AG04450 (cell line): ENCODE measurements at regions of chr17 and their contacts with region 1.

Region 1: GRCh38 chr17:27236717-27237315 is 57.1 kb upstream of the WSB1 start:
- DNase-seq: peak; percentile 59
- H3K4me3 ChIP-seq: no peak overlapping the region
- H3K27ac ChIP-seq: no peak overlapping the region
- H3K27me3 ChIP-seq: no peaks in the 10 kb centered on the region
- CTCF ChIP-seq: peak; percentile 95

Region 2: GRCh38 chr17:27217631-27218030 is 19.2 kb before region 1 on chr17:
- CTCF ChIA-PET with region 1: interaction called, 12 read pairs
- POLR2A ChIA-PET with region 1: no interaction called
- DNase-seq: no peak
- H3K4me3 ChIP-seq: no peak overlapping the region
- H3K27ac ChIP-seq: no peak overlapping the region
- H3K27me3 ChIP-seq: peaks cover 8% of the 10 kb centered on the region
- CTCF ChIP-seq: no peak

Region 3: DNA sequence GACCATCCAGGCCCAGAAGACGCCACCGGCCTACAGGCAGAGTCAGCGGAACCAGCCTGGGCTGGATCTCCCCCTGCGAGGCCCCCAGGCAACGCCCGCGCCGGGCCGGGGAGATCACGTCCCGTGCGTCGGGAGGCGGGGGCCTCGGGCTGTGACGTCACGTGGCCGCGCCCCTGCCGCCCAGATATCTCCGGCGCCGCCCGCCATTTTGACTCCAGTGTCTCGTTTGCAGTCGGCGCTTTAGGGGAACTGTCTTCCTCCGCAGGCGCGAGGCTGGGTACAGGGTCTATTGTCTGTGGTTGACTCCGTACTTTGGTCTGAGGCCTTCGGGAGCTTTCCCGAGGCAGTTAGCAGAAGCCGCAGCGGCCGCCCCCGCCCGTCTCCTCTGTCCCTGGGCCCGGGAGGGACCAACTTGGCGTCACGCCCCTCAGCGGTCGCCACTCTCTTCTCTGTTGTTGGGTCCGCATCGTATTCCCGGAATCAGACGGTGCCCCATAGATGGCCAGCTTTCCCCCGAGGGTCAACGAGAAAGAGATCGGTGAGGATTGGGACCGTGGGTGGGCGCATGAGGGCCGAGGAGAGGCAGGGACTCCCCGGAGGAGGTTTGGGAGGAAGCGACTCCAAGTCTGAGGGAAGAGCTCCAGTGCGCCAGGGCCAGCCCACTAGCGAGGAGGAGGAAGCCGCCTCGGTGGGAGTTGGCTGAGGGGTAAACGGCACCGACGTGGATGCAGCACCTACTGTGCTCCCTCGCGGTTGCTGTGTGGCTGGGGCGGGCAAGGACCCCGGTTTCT is 57.3 kb after region 1 on chr17 and contains the start of gene WSB1:
- CTCF ChIA-PET with region 1: interaction called, 39 read pairs
- POLR2A ChIA-PET with region 1: interaction called, 17 read pairs
- DNase-seq: peak; percentile 73
- H3K4me3 ChIP-seq: peak within 1 kb of the TSS; percentile 94
- H3K27ac ChIP-seq: peak within 1 kb of the TSS; percentile 98
- H3K27me3 ChIP-seq: no peaks in the 10 kb centered on the region
- CTCF ChIP-seq: no peak
- polyA plus RNA-seq, gene WSB1: 156 and 204 TPM in 2 replicates

Region 4: DNA sequence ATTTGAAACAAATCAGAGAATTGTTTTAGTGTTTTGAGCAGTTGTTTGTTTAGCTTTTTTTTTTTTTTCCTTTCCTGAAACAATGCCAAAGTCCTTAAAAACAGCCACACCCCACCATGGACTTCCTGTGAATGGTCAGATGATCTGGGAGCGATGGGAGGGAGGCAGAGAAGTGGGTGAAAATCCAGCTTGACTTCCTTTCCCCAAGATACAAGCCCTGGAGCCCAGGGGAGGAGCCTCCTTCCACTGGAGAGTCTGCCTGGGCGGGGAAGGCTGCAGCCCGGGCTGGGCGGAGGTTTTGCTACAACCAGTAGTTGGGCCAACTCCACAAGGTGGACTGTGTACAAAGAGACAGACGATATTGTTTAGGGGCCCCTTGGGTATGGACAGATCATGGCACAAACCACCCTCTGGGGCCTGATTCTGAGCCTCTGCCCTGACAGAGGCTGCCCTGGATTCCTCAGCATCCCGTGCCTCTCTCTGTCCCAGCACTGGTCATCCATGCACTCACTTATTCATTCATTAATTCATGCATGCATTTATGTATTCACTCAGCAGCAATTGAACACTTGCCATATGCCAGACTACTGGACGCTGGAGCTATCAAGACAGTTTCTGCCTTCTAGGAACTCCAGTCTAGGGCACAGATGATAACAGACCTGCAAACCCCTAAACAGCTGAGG is 86.8 kb after region 1 on chr17:
- CTCF ChIA-PET with region 1: interaction called, 41 read pairs
- POLR2A ChIA-PET with region 1: interaction called, 6 read pairs
- DNase-seq: no peak
- H3K4me3 ChIP-seq: no peak overlapping the region
- H3K27ac ChIP-seq: no peak overlapping the region
- H3K27me3 ChIP-seq: no peaks in the 10 kb centered on the region
- CTCF ChIP-seq: no peak

Region 5: GRCh38 chr17:27353461-27354050 is 116.7 kb after region 1 on chr17:
- CTCF ChIA-PET with region 1: interaction called, 14 read pairs
- POLR2A ChIA-PET with region 1: no interaction called
- DNase-seq: peak; percentile 81
- H3K4me3 ChIP-seq: peak overlapping the region; percentile 69
- H3K27ac ChIP-seq: peak overlapping the region; percentile 78
- H3K27me3 ChIP-seq: peaks cover 3% of the 10 kb centered on the region
- CTCF ChIP-seq: peak; percentile 53

Region 6: DNA sequence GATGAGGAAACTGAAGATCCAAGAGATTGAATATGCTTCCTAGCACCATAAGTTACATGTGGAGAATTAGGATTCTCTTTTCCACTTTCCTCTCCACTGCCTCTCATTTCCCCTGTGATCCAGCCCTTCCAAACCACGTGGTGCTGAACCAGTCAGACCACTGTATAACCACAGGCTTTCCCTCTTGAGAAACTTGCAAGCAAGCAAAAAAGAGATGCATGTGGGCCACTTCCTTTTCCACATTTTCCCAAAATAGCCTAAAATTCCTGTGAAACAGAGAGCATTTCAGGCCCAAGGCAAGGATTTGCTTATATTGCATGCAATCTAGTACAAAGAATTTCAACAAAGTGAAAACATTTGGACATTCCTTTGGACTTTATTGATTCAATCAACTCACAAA is 160.1 kb after region 1 on chr17:
- CTCF ChIA-PET with region 1: no interaction called
- POLR2A ChIA-PET with region 1: no interaction called
- DNase-seq: no peak
- H3K4me3 ChIP-seq: no peak overlapping the region
- H3K27ac ChIP-seq: no peak overlapping the region
- H3K27me3 ChIP-seq: peaks cover 19% of the 10 kb centered on the region
- CTCF ChIP-seq: no peak

Region 7: GRCh38 chr17:27654654-27655524 is 418.1 kb after region 1 on chr17:
- CTCF ChIA-PET with region 1: interaction called, 36 read pairs
- POLR2A ChIA-PET with region 1: no interaction called
- DNase-seq: peak; percentile 6
- H3K4me3 ChIP-seq: no peak overlapping the region
- H3K27ac ChIP-seq: no peak overlapping the region
- H3K27me3 ChIP-seq: no peaks in the 10 kb centered on the region
- CTCF ChIP-seq: peak; percentile 76